Dorsolateral prefrontal cortex (tissue), 120 donors: ENCODE measurements at regions of chr19 and their contacts with region 1.

Region 1: GRCh38 chr19:54218960-54219661 is 3.7 kb downstream of the LILRB3 start:
- DNase-seq: no peak
- H3K4me3 ChIP-seq: no peak overlapping the region
- H3K27ac ChIP-seq: no peak overlapping the region
- H3K27me3 ChIP-seq: peaks cover 0 to 20% (median 0%) of the 10 kb centered on the region in 45 donors
- CTCF ChIP-seq: no peak

Region 2: DNA sequence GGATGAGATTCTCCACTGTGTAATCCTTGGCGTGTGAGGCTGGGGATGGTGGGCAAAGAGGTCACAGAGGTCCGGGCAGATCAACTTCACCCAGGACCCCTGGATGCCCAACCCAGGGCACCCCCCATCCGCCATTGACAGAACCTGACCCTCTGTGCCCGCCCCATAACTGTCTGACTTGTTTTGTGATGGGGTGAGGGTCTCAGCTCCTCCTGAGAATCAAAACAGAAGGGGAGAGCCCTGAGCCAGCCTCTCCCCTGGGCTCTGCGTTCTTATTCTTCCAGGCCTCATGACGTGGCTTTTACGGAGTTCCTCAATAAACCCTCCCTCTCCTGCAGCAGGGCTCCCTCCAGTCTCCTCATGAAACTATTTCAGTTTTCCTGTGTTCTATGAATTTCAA is 19.9 kb after region 1 on chr19:
- intact Hi-C with region 1: loop called in 1 of 2 experiments (anchors 2 kb)
- DNase-seq: no peak
- H3K4me3 ChIP-seq: no peak overlapping the region
- H3K27ac ChIP-seq: no peak overlapping the region
- H3K27me3 ChIP-seq: peaks cover 0 to 27% (median 0%) of the 10 kb centered on the region in 45 donors
- CTCF ChIP-seq: no peak